HepG2 (cell line): ENCODE measurements at regions of chr14 and their contacts with region 1.

Region 1: DNA sequence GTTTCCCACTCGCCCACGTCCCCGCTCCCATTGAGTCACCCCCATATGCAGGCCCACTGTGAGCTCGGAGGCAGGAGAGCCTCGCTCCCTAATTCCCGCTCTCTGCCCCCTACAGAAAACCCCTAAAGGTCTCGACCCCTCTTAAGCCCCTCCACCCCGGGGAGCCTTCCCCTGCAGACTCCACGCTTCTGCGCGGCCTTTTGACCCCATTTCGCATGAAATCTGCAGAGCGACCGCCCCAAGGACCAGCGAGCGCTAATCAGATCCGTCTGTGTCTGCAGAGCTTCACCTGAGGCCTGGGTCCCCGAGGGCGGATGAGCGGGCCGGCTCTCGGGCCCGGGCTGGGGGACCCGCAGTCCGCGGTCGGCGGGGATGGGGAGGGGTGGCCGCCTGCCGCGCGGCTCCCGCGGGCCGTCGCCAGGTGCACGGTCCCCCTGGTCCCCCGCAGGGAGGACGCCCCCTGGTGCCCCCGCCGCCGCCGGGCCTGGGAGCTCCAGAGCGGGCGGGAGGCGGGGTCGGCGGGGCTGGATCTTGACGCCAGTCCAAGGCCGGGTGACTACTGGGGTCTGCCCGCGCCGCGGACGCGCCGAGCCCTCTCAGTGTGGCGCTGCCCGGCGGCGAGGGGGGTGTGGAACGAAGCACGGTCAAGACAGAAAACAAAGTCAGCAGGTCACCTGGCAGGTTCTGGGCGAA is 10.1 kb downstream of the BMP4 start:
- DNase-seq: no peak
- ATAC-seq: no peak; the same call in 2 of the 3 replicates
- H3K4me3 ChIP-seq: no peak overlapping the region
- H3K27ac ChIP-seq: no peak overlapping the region
- H3K4me1 ChIP-seq: peaks cover 77% of the 10 kb centered on the region
- H3K27me3 ChIP-seq: no peaks in the 10 kb centered on the region
- CTCF ChIP-seq: no peak
- EP300 ChIP-seq: no peak
- POLR2A ChIP-seq: no peak
- RAD21 ChIP-seq: no peak

Region 2: GRCh38 chr14:53432378-53432802 is 514.2 kb before region 1 on chr14:
- CTCF ChIA-PET with region 1: no interaction called
- POLR2A ChIA-PET with region 1: no interaction called
- in situ Hi-C with region 1: no loop called
- intact Hi-C with region 1: loop called (anchors 10 kb)
- DNase-seq: peak; percentile 59
- ATAC-seq: peak; percentile 92
- H3K4me3 ChIP-seq: no peak overlapping the region
- H3K27ac ChIP-seq: no peak overlapping the region
- H3K4me1 ChIP-seq: peaks cover 27% of the 10 kb centered on the region
- H3K27me3 ChIP-seq: no peaks in the 10 kb centered on the region
- CTCF ChIP-seq: peak; percentile 92
- EP300 ChIP-seq: no peak
- POLR2A ChIP-seq: no peak
- RAD21 ChIP-seq: peak; percentile 88

Region 3: GRCh38 chr14:53842938-53843337 is 103.6 kb before region 1 on chr14:
- CTCF ChIA-PET with region 1: no interaction called
- POLR2A ChIA-PET with region 1: no interaction called
- in situ Hi-C with region 1: no loop called
- intact Hi-C with region 1: loop called (anchors 1 kb)
- DNase-seq: peak; percentile 95
- ATAC-seq: peak; percentile 98
- H3K4me3 ChIP-seq: no peak overlapping the region
- H3K27ac ChIP-seq: peak overlapping the region; percentile 53
- H3K4me1 ChIP-seq: peaks cover 85% of the 10 kb centered on the region
- H3K27me3 ChIP-seq: no peaks in the 10 kb centered on the region
- CTCF ChIP-seq: no peak
- EP300 ChIP-seq: peak; percentile 62 to 76; a peak in 2 of 4 replicates
- POLR2A ChIP-seq: no peak
- RAD21 ChIP-seq: no peak

Region 4: GRCh38 chr14:53881161-53881871 is 65.2 kb before region 1 on chr14:
- CTCF ChIA-PET with region 1: no interaction called
- POLR2A ChIA-PET with region 1: no interaction called
- in situ Hi-C with region 1: no loop called
- intact Hi-C with region 1: loop called (anchors 10 kb)
- DNase-seq: peak; percentile 86
- ATAC-seq: peak; percentile 84
- H3K4me3 ChIP-seq: peak overlapping the region in 2 of 3 experiments; percentile 13 to 29; a peak in 3 of 6 replicates
- H3K27ac ChIP-seq: peak overlapping the region; percentile 77
- H3K4me1 ChIP-seq: peaks cover 66% of the 10 kb centered on the region
- H3K27me3 ChIP-seq: no peaks in the 10 kb centered on the region
- CTCF ChIP-seq: no peak
- EP300 ChIP-seq: peak in 1 of 2 experiments; percentile 46; a peak in 2 of 4 replicates
- POLR2A ChIP-seq: no peak
- RAD21 ChIP-seq: no peak

Region 5: DNA sequence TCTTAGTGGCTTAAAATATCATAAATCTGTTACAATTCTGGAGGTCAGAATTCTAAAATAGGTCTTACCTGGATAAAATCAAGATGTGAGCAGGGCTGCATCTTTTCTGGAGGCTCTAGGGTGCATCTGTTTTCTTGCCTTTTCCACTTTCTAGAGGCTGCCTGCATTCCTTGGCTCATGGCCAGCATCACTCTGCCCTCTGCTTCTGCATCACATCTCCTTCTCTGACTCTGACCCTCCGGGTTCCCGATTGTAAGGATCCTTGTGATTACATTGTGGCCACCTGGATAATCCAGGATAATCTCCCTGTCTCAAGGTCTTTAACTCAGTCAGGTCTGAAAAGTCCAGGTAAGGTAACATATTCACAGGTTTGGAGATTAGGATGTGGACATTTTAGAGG is 21.1 kb after region 1 on chr14:
- CTCF ChIA-PET with region 1: no interaction called
- POLR2A ChIA-PET with region 1: no interaction called
- in situ Hi-C with region 1: no loop called
- intact Hi-C with region 1: no loop called
- DNase-seq: no peak
- ATAC-seq: no peak
- H3K4me3 ChIP-seq: no peak overlapping the region
- H3K27ac ChIP-seq: no peak overlapping the region
- H3K4me1 ChIP-seq: peaks cover 28% of the 10 kb centered on the region
- H3K27me3 ChIP-seq: no peaks in the 10 kb centered on the region
- CTCF ChIP-seq: no peak
- EP300 ChIP-seq: no peak
- POLR2A ChIP-seq: no peak
- RAD21 ChIP-seq: no peak

Region 6: GRCh38 chr14:53979747-53980642 is 33.4 kb after region 1 on chr14:
- CTCF ChIA-PET with region 1: no interaction called
- POLR2A ChIA-PET with region 1: no interaction called
- in situ Hi-C with region 1: no loop called
- intact Hi-C with region 1: no loop called
- DNase-seq: peak; percentile 97
- ATAC-seq: peak; percentile 86
- H3K4me3 ChIP-seq: peak overlapping the region in 2 of 3 experiments; percentile 1 to 18; a peak in 2 of 6 replicates
- H3K27ac ChIP-seq: peak overlapping the region; percentile 99
- H3K4me1 ChIP-seq: peaks cover 75% of the 10 kb centered on the region
- H3K27me3 ChIP-seq: no peaks in the 10 kb centered on the region
- CTCF ChIP-seq: no peak
- EP300 ChIP-seq: peak; percentile 83 to 96; a peak in 3 of 4 replicates
- POLR2A ChIP-seq: no peak
- RAD21 ChIP-seq: no peak